Adrenal gland (tissue), 19 donors: ENCODE measurements at regions of chr6 and their contacts with region 1.

Region 1: DNA sequence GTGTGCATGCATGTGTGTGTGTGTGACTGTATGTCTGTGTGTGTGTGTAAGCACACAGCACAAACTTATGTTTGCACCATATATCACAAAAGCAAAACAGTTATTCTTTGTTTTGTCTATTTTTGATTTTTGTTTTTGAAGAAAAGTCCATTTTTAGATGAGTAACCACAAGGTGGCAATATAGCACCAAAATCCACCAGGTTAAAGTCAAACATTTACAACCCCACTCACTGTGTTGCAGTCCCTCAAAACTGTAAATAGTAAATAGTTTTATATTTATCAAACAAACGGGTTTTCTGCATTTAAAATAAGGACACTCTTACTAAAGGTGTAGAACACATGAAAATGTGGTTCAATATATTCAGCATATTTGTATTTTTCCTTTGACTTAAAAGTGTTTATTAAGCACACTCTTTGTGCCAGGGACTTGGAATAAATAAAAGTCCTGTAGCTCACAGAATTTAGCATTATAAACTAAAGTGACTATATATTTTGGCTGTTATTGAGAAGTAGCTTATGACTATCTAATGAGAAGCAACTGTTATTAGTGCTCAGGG is 118.5 kb downstream of the GFRAL start:
- DNase-seq: peak in 1 of 7 donors; percentile 1
- H3K4me3 ChIP-seq: no peak overlapping the region
- H3K27ac ChIP-seq: no peak overlapping the region
- H3K4me1 ChIP-seq: no peaks in the 10 kb centered on the region
- H3K27me3 ChIP-seq: no peaks in the 10 kb centered on the region
- CTCF ChIP-seq: peak; percentile 28 to 64 (median 48)
- POLR2A ChIP-seq: no peak

Region 2: GRCh38 chr6:55886185-55886836 is 440.6 kb after region 1 on chr6:
- intact Hi-C with region 1: loop called in 1 of 2 experiments (anchors 10 kb)
- DNase-seq: no peak
- H3K4me3 ChIP-seq: no peak overlapping the region
- H3K27ac ChIP-seq: no peak overlapping the region
- H3K4me1 ChIP-seq: peaks cover 0 to 6% of the 10 kb centered on the region in 2 donors
- H3K27me3 ChIP-seq: no peaks in the 10 kb centered on the region
- CTCF ChIP-seq: peak; percentile 20 to 59 (median 44)
- POLR2A ChIP-seq: no peak